ENCODE measurements at regions of chr9 and their contacts with region 1.

Region 1: GRCh38 chr9:112097712-112098688 is 77.1 kb downstream of the SUSD1 start:
- DNase-seq: no peak
- H3K4me3 ChIP-seq: no peak overlapping the region
- CTCF ChIP-seq: peak; percentile 74

Region 2: DNA sequence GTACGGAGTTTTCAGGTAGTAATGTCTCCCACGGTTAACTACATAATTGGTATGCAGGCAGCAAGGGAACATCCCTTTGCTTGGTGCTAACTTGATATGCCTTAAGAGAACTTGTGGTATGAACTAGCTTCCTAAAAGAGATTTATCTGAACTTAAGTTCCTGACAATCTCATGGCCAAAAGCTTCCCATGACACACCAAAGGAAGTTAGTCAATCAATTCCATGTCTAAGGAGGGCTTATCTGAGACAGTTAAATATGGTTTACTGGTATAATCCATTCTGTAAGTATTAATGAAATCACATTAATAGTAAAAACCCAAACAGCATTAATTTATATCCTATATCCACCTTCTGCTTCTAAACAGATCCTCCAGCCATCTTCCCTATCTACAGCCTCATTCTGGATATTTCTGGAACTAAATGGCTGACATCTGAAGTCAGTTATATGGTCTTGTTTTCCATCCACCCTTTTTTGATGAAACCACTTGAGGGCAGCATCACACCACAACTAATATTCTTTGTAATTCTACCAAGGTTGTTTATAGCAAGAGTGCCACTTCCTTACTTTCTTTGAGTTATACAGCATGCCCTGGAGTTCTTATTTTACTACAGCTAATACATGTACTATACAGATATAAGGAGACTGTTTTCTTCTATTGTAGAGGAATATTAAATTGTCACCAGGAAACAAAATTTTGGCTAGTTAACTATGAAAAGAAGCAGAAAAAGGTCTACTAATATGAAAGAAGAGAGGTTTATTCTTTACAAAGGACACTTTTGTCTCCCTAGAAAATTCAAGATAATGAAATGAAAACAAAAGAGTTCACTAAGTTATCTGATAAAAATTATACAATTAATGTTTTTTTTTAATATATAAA is 338.0 kb before region 1 on chr9:
- CTCF ChIA-PET with region 1: interaction called, 12 read pairs
- POLR2A ChIA-PET with region 1: no interaction called
- DNase-seq: peak; percentile 65
- H3K4me3 ChIP-seq: no peak overlapping the region
- CTCF ChIP-seq: peak; percentile 47

Region 3: DNA sequence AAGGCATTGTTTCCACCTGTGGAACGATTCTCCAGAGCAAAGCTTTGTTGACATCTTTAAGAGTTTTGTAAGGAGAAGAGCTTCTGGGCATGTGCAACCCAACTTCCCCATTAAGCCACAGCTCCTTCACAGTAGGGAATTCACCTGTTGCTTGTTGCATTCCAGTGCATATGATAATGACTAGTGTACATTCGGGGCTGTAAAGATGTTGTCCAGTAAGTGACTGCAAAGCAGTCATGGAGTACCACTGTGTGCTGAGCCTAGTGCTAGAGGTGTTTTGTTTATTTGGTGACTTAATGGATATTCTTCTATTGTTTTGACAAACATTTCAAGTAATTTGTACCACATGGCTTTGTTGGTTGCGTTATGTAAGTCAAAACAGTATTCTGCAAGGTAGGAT is 188.6 kb before region 1 on chr9:
- CTCF ChIA-PET with region 1: no interaction called
- POLR2A ChIA-PET with region 1: no interaction called
- DNase-seq: no peak
- H3K4me3 ChIP-seq: no peak overlapping the region
- CTCF ChIP-seq: no peak

Region 4: DNA sequence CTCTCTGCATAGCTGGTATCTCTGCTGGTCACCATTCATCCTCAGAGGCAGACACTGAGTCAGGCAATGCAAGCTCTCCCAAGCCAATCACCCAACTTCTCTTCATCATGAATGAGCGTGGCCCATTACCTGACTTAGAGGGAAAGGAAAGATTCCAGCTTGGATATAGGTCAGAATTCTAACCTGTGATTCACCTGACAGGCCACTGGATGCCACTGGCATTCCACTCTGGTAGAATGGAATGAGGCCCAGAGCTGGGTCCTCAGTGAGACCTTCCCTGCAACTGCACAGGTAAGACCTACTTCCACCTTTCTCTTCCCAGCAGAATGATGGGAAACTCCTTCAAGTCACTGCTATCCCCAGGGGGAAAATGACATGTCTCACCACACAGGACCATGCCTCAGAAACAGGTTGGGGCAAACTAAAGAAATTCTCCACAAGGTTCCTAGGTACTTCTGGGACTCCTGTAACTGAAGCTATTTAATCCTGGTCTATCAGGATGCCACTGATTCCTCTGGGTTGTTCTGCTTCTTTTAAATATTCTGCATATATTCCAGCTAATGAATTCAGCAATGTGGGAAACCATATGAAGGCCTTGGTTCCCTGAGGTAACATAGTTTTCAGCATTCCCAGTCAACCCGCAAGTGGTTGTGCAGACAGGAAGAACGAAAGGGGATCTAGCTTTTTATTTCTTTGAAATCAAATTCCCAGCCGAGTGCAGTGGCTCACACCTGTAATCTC is 15.1 kb after region 1 on chr9:
- CTCF ChIA-PET with region 1: interaction called, 16 read pairs
- POLR2A ChIA-PET with region 1: no interaction called
- DNase-seq: no peak
- H3K4me3 ChIP-seq: no peak overlapping the region
- CTCF ChIP-seq: peak; percentile 17

Region 5: DNA sequence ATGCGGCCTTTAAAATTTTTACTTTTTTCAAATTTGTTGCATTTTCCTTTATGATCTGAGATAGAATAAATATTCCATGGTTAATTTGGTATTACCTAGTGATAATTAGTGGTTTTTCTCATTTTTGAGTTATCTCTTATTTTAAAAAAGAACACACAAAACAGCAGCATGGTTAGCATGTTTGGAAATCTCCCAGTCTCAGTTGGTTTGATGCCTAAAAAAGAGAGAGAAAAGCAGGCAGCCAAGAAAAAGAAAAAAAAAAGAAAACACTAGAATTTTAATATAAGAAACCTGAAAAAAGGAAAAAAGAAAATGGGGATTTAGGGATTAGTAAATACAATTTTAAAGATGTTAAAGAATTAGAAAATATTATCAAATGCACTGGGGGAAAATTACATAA is 61.8 kb after region 1 on chr9:
- CTCF ChIA-PET with region 1: no interaction called
- POLR2A ChIA-PET with region 1: no interaction called
- DNase-seq: no peak
- H3K4me3 ChIP-seq: no peak overlapping the region
- CTCF ChIP-seq: no peak

Region 6: GRCh38 chr9:112348257-112349007 is 250.4 kb after region 1 on chr9:
- CTCF ChIA-PET with region 1: interaction called, 241 read pairs
- POLR2A ChIA-PET with region 1: no interaction called
- DNase-seq: no peak
- H3K4me3 ChIP-seq: peak overlapping the region; percentile 51
- CTCF ChIP-seq: no peak

Region 7: GRCh38 chr9:112379177-112380101 is 281.4 kb after region 1 on chr9:
- CTCF ChIA-PET with region 1: interaction called, 16 read pairs
- POLR2A ChIA-PET with region 1: no interaction called
- DNase-seq: peak; percentile 78
- H3K4me3 ChIP-seq: peak overlapping the region; percentile 90
- CTCF ChIP-seq: peak; percentile 5